HCT116 (cell line): ENCODE measurements at regions of chr1 and their contacts with region 1.

Region 1: DNA sequence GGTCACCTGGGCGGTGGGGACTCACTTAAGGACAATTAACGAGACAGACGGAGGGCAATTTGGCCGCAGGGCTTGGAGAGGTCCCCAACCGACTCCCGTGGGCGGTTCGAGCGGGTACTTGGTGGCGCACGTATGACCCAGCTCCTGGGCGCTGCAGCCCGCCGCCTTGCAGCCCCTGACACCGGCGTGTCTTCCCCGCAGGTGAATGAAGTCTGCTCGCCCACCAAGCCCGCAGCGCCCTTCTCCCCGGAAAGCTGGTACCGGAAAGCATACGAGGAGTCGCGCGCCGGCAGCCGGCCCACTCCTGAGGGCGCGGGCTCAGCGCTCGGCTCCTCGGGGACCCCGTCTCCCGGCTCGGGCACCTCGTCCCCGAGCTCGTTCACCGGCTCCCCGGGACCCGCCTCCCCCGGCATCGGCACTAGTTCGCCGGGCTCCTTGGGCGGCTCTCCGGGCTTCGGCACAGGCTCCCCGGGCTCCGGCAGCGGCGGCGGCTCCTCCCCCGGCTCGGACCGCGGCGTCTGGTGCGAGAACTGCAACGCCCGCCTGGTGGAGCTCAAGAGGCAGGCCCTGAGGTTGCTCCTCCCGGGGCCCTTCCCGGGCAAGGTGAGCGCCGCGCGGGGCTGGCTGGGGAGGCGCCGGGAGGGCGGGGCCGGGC is 1.4 kb downstream of the KIF26B start:
- DNase-seq: peak; percentile 52
- ATAC-seq: peak; percentile 90
- H3K4me3 ChIP-seq: peak overlapping the region; percentile 19 to 50
- H3K27ac ChIP-seq: no peak overlapping the region
- H3K4me1 ChIP-seq: peaks cover 7 to 40% of the 10 kb centered on the region in 2 experiments; a peak in 3 of 4 replicates
- H3K27me3 ChIP-seq: peaks cover 8% of the 10 kb centered on the region; the same call in 1 of the 2 replicates
- CTCF ChIP-seq: peak; percentile 56 to 73 (median 68); a peak in 5 of 6 replicates
- POLR2A ChIP-seq: no peak
- RAD21 ChIP-seq: peak; percentile 89

Region 2: DNA sequence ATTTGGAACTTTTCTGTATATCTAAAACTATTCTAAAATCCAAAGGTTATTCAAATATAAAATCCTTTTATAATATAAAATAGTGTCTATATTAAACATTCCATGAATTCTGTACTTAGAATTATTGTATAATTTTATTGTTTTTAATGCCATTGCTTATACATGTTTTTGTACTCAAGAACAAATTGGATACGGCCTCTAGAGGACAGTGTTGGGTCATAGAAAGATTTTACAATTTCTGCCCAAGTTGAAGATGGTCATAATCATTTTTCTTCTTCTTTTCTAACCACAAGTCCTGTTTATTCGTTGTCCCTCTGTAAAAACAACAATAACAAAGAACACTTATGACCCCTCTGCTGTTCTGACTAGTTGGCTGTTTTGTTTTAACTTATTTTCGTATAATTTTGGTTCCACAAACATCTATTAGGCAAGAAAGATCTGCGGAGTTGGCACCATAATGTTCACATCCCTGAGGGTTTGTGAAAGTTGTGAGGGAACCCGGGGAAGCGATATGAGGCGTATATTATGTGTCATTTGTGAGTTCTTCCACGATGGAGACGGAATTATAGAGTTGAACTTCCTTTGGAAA is 77.1 kb before region 1 on chr1:
- CTCF ChIA-PET with region 1: interaction called, 3 read pairs
- POLR2A ChIA-PET with region 1: no interaction called
- RAD21 ChIA-PET with region 1: no interaction called
- intact Hi-C with region 1: loop called (anchors 5 kb)
- DNase-seq: peak; percentile 57
- ATAC-seq: 0 out of 2 replicates have a peak, but pooled peaks have one; percentile 53
- H3K4me3 ChIP-seq: no peak overlapping the region
- H3K27ac ChIP-seq: no peak overlapping the region
- H3K4me1 ChIP-seq: no peaks in the 10 kb centered on the region
- H3K27me3 ChIP-seq: no peaks in the 10 kb centered on the region
- CTCF ChIP-seq: peak; percentile 71 to 81 (median 78)
- POLR2A ChIP-seq: no peak
- RAD21 ChIP-seq: peak; percentile 89

Region 3: GRCh38 chr1:245277276-245277675 is 121.1 kb after region 1 on chr1:
- CTCF ChIA-PET with region 1: interaction called, 3 read pairs
- POLR2A ChIA-PET with region 1: no interaction called
- RAD21 ChIA-PET with region 1: interaction called in 1 of 2 experiments, 3 read pairs
- intact Hi-C with region 1: loop called (anchors 1 kb)
- DNase-seq: no peak
- ATAC-seq: peak; percentile 86
- H3K4me3 ChIP-seq: no peak overlapping the region
- H3K27ac ChIP-seq: no peak overlapping the region
- H3K4me1 ChIP-seq: no peaks in the 10 kb centered on the region
- H3K27me3 ChIP-seq: 0 out of 2 replicates have a peak, but pooled peaks cover 6% of the 10 kb centered on the region
- CTCF ChIP-seq: peak; percentile 47 to 60 (median 47); a peak in 5 of 6 replicates
- POLR2A ChIP-seq: no peak
- RAD21 ChIP-seq: peak; percentile 63

Region 4: GRCh38 chr1:246002725-246003441 is 846.7 kb after region 1 on chr1:
- CTCF ChIA-PET with region 1: interaction called, 21 read pairs
- POLR2A ChIA-PET with region 1: no interaction called
- RAD21 ChIA-PET with region 1: interaction called, 5 to 7 read pairs
- intact Hi-C with region 1: loop called (anchors 1 kb)
- DNase-seq: peak; percentile 73
- ATAC-seq: peak; percentile 87
- H3K4me3 ChIP-seq: no peak overlapping the region
- H3K27ac ChIP-seq: no peak overlapping the region
- H3K4me1 ChIP-seq: peaks cover 11 to 23% of the 10 kb centered on the region in 2 experiments
- H3K27me3 ChIP-seq: no peaks in the 10 kb centered on the region
- CTCF ChIP-seq: peak; percentile 74 to 88 (median 78)
- POLR2A ChIP-seq: no peak
- RAD21 ChIP-seq: peak; percentile 96

Region 5: GRCh38 chr1:246280551-246280950 is 1124.3 kb after region 1 on chr1:
- CTCF ChIA-PET with region 1: interaction called, 3 read pairs
- POLR2A ChIA-PET with region 1: no interaction called
- RAD21 ChIA-PET with region 1: interaction called in 1 of 2 experiments, 3 read pairs
- intact Hi-C with region 1: loop called (anchors 10 kb)
- DNase-seq: peak; percentile 10
- ATAC-seq: peak; percentile 50; the same call in 1 of the 2 replicates
- H3K4me3 ChIP-seq: no peak overlapping the region
- H3K27ac ChIP-seq: no peak overlapping the region
- H3K4me1 ChIP-seq: no peaks in the 10 kb centered on the region
- H3K27me3 ChIP-seq: no peaks in the 10 kb centered on the region
- CTCF ChIP-seq: peak; percentile 22 to 44 (median 43); a peak in 3 of 6 replicates
- POLR2A ChIP-seq: no peak
- RAD21 ChIP-seq: peak; percentile 70

Region 6: GRCh38 chr1:246497331-246497915 is 1341.2 kb after region 1 on chr1:
- CTCF ChIA-PET with region 1: interaction called, 5 read pairs
- POLR2A ChIA-PET with region 1: no interaction called
- RAD21 ChIA-PET with region 1: no interaction called
- intact Hi-C with region 1: loop called (anchors 1 kb)
- DNase-seq: peak; percentile 60
- ATAC-seq: peak; percentile 65
- H3K4me3 ChIP-seq: no peak overlapping the region
- H3K27ac ChIP-seq: no peak overlapping the region
- H3K4me1 ChIP-seq: peaks cover 0 to 3% of the 10 kb centered on the region in 2 experiments; a peak in 2 of 4 replicates
- H3K27me3 ChIP-seq: no peaks in the 10 kb centered on the region
- CTCF ChIP-seq: peak; percentile 57 to 77 (median 77); a peak in 5 of 6 replicates
- POLR2A ChIP-seq: no peak
- RAD21 ChIP-seq: peak; percentile 77